ENCODE measurements at regions of chr17 and their contacts with region 1.

Region 1: GRCh38 chr17:50865984-50866774 is at the start of gene TOB1:
- DNase-seq: peak; percentile 97
- ATAC-seq: peak; percentile 76
- H3K4me3 Mint-ChIP-seq: peak within 1 kb of the TSS; percentile 99
- H3K27ac Mint-ChIP-seq: peak within 1 kb of the TSS; percentile 100
- H3K4me1 Mint-ChIP-seq: peaks cover 44% of the 10 kb centered on the region
- H3K27me3 Mint-ChIP-seq: no peaks in the 10 kb centered on the region
- CTCF ChIP-seq: no peak
- total RNA-seq, gene TOB1: 18.8 and 20.4 TPM in 2 replicates

Region 2: DNA sequence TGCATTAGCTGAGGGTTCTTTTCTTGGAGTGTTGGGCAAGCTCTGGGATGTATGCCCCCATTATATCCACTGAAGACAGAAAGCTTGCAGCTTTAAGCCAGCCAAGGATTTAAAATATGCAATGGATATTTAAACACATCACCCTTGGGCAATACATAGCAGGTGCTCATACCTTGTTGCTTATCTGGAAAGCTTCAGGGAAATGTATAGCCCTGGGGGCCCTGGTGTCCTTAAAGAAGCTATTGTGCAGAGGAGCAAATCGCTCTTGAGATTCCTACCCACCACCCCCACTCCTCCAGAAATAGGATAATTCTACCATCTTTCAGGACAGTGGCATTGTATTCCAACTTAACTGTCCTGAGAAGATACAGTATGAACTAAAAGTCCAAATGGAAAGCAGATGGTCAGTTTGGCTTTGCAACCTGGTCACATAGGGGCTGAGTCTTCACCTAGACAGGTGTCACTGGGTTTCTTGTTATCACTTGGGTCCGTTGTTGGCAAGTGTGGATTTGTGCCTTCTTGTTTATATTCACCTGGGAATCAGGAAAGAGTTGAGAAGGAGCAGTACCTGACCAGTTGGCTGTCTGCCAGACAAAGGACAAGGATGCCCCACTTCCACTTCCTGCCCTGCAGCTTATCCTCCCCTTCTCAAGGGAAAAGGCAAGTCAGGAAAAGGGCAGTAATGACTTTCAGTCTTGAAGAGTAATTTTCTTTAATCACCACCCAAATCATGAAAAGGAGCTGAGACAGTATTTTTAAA is 102.3 kb before region 1 on chr17:
- CTCF ChIA-PET with region 1: no interaction called
- POLR2A ChIA-PET with region 1: interaction called, 16 read pairs
- intact Hi-C with region 1: no loop called
- DNase-seq: no peak
- ATAC-seq: no peak
- H3K4me3 Mint-ChIP-seq: peak overlapping the region; percentile 97
- H3K27ac Mint-ChIP-seq: no peak overlapping the region
- H3K4me1 Mint-ChIP-seq: peaks cover 38% of the 10 kb centered on the region
- H3K27me3 Mint-ChIP-seq: no peaks in the 10 kb centered on the region
- CTCF ChIP-seq: no peak

Region 3: GRCh38 chr17:50883850-50884438 is 17.8 kb after region 1 on chr17:
- CTCF ChIA-PET with region 1: interaction called, 3 read pairs
- POLR2A ChIA-PET with region 1: interaction called, 41 read pairs
- intact Hi-C with region 1: loop called (anchors 2 kb)
- DNase-seq: no peak
- ATAC-seq: peak; percentile 94
- H3K4me3 Mint-ChIP-seq: no peak overlapping the region
- H3K27ac Mint-ChIP-seq: no peak overlapping the region
- H3K4me1 Mint-ChIP-seq: peaks cover 13% of the 10 kb centered on the region
- H3K27me3 Mint-ChIP-seq: no peaks in the 10 kb centered on the region
- CTCF ChIP-seq: no peak

Region 4: DNA sequence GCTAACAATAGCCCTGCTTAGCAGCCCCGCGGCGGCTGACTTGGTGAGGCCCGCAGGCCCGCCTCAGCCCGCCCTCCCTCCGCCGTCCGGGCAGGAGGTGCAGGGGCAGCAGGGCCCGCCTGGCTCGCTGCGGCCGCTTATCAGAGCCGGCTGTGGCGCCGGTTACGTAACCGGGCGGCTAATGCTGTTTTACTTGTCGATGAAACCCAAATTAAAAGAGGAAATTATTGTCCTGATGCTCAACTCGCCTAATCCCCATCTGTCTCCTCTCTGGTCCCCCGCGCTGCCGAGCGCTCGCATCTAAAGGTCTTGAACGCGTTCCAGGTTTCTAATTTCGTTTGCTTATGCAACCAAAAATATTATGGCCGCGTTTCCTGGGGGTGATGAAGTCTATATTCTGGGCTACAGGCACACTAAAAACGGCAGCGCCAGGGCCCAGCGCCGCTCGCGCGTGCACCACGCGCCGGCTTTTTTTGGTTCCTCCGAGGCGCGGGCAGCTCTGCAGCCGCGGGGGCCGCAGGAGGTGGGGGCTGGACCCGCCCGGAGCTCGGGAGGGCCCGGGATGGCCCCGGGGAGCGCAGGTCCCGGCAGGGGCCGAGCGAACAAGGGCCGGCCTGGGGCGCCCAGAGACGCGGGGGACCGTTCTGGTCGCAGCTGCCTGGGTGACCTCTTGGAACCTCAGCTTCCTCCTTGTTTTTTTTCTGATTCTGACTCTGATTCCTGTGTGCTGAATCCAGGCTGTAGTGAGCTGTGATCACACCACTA is 65.1 kb after region 1 on chr17:
- CTCF ChIA-PET with region 1: no interaction called
- POLR2A ChIA-PET with region 1: interaction called, 26 read pairs
- intact Hi-C with region 1: no loop called
- DNase-seq: no peak
- ATAC-seq: peak; percentile 78
- H3K4me3 Mint-ChIP-seq: peak overlapping the region; percentile 84
- H3K27ac Mint-ChIP-seq: peak overlapping the region; percentile 24
- H3K4me1 Mint-ChIP-seq: peaks cover 14% of the 10 kb centered on the region
- H3K27me3 Mint-ChIP-seq: peaks cover 11% of the 10 kb centered on the region
- CTCF ChIP-seq: no peak

Region 5: DNA sequence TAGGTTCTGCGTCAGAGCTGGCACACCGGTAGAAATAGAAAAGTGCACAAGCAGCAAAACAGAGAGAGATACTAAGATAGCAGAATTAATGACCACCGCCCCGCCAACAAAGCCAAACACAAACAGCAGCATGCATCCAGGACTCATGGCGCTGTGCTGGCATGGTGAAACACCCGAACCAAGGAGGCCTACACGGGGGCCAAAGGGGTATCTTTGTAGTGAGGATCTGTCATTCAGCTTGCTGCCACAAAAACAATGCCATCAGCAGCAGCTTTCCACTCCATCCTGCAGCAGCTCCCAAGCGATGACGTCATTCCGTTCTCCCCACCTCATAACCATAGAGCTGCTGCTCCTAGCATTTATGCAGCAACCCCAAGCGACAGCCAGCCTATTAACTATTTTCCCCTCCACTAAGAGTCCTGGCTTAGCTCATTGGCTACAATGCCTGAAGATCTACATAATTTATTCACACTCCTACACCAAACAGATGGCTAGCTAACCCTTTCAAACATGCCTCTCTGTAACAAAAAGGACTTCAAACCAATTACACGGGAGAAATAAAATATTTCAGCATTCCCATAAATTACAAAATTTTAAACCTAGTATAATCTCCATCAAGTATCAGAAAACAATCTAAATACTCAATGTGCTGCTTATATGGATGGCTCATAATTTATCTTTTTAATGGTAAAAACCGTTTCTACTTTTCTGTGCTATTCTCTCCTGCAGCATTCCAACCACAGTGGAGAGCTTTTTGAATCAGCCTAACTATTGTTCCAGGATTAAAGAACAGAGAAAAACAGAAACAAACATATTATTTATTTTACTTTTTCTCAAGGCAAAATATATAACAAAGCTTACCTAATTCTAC is 180.6 kb after region 1 on chr17:
- CTCF ChIA-PET with region 1: no interaction called
- POLR2A ChIA-PET with region 1: interaction called, 14 read pairs
- intact Hi-C with region 1: loop called (anchors 1 kb)
- DNase-seq: no peak
- ATAC-seq: no peak
- H3K4me3 Mint-ChIP-seq: no peak overlapping the region
- H3K27ac Mint-ChIP-seq: no peak overlapping the region
- H3K4me1 Mint-ChIP-seq: peaks cover 26% of the 10 kb centered on the region
- H3K27me3 Mint-ChIP-seq: no peaks in the 10 kb centered on the region
- CTCF ChIP-seq: no peak

Region 6: DNA sequence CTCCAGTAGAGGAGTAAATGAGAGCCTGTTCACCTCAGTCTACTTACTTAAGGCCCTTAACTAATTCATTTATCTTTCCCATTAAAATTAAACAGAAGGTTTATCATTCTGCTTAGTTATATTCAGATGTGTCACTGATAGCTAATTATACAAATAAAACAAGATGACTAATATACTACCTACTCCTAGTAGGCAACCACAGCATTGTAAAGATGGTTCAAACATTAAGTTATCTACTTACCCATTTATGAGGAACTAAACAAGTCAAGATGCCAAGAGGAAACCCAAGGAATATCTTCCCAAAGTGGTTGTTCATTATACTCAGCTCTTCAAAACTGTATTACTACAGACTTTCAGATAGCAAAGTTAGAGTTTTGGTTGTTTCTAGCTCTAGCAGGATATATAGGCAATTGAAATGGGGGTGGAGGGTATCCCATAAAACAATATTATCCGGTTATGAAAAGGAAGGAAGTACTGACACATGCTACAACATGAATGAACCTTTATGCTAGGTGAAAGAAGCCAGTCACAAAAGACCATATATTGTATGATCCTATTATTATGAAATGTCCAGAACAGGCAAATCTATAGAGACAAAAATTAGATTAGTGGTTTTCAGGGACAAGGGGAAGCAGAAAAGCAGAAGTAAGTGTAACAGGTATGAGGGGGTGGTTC is 198.0 kb after region 1 on chr17:
- CTCF ChIA-PET with region 1: no interaction called
- POLR2A ChIA-PET with region 1: no interaction called
- intact Hi-C with region 1: no loop called
- DNase-seq: no peak
- ATAC-seq: no peak
- H3K4me3 Mint-ChIP-seq: no peak overlapping the region
- H3K27ac Mint-ChIP-seq: no peak overlapping the region
- H3K4me1 Mint-ChIP-seq: peaks cover 12% of the 10 kb centered on the region
- H3K27me3 Mint-ChIP-seq: no peaks in the 10 kb centered on the region
- CTCF ChIP-seq: no peak

Region 7: GRCh38 chr17:51153210-51154072 is 287.3 kb after region 1 on chr17 and contains the start of gene NME1:
- CTCF ChIA-PET with region 1: interaction called, 4 read pairs
- POLR2A ChIA-PET with region 1: interaction called, 23 read pairs
- intact Hi-C with region 1: loop called (anchors 1 kb)
- DNase-seq: peak; percentile 99
- ATAC-seq: peak; percentile 88
- H3K4me3 Mint-ChIP-seq: no peak within 1 kb of the TSS
- H3K27ac Mint-ChIP-seq: no peak within 1 kb of the TSS
- H3K4me1 Mint-ChIP-seq: peaks cover 7% of the 10 kb centered on the region
- H3K27me3 Mint-ChIP-seq: no peaks in the 10 kb centered on the region
- CTCF ChIP-seq: no peak
- total RNA-seq, gene NME1: 130 and 138 TPM in 2 replicates

Measured in activated B cell treated with CpG ODN at 0.5 μM for 24 hours (primary cell).